SK-N-SH (cell line): ENCODE measurements at regions of chr6 and their contacts with region 1.

Region 1: GRCh38 chr6:107847844-107848802 is 24.0 kb upstream of the SCML4 start:
- DNase-seq: peak; percentile 95
- H3K4me3 ChIP-seq: peak overlapping the region; percentile 47 to 64
- H3K27ac ChIP-seq: no peak overlapping the region
- H3K4me1 ChIP-seq: peaks cover 0 to 4% of the 10 kb centered on the region in 2 experiments; a peak in 1 of 4 replicates
- H3K27me3 ChIP-seq: no peaks in the 10 kb centered on the region; the same call in 1 of the 2 replicates
- CTCF ChIP-seq: peak; percentile 88
- EP300 ChIP-seq: no peak
- RAD21 ChIP-seq: peak; percentile 82

Region 2: DNA sequence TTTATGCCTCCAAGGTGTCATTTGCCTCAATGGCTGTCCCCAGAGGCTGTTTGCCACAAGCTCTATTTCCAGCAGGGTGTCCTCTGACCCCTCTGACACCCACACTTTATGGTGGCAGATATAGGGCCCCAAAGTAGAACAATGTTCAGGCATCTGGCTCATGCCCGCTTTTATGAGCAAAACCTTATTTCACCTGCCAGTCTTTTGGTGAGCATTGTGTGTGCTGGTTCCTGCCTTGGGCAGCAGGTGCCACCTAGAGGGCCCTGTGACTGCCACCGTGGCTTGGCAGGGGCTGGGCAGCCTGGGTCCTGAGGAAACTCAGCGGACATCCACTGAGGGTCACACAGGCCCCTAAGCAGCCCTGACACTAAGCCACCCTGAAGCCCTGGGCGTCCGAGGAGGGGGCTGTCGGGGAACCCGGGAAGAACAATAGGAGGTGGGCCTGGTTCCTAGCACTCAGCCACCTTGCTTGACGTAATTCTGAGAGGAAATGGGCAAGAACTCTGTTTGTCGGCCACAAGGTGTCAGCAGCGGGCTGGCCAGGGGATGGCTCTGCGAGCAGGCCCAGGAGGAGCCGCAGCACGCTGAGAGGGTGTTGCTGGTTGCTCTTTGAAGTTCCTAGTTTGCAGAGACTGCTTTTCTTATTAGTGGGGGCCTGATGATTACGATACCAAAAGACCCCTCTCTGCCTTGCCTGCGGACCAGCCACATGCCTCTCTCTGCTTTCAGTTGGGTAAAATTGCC is 173.0 kb before region 1 on chr6:
- CTCF ChIA-PET with region 1: interaction called, 98 read pairs
- POLR2A ChIA-PET with region 1: no interaction called
- DNase-seq: peak; percentile 83
- H3K4me3 ChIP-seq: no peak overlapping the region; a peak in 1 of 4 replicates
- H3K27ac ChIP-seq: peak overlapping the region in 1 of 2 experiments; percentile 64; a peak in 1 of 4 replicates
- H3K4me1 ChIP-seq: peaks cover 0 to 22% of the 10 kb centered on the region in 2 experiments; a peak in 2 of 4 replicates
- H3K27me3 ChIP-seq: no peaks in the 10 kb centered on the region
- CTCF ChIP-seq: peak; percentile 83
- EP300 ChIP-seq: no peak
- RAD21 ChIP-seq: peak; percentile 86

Region 3: DNA sequence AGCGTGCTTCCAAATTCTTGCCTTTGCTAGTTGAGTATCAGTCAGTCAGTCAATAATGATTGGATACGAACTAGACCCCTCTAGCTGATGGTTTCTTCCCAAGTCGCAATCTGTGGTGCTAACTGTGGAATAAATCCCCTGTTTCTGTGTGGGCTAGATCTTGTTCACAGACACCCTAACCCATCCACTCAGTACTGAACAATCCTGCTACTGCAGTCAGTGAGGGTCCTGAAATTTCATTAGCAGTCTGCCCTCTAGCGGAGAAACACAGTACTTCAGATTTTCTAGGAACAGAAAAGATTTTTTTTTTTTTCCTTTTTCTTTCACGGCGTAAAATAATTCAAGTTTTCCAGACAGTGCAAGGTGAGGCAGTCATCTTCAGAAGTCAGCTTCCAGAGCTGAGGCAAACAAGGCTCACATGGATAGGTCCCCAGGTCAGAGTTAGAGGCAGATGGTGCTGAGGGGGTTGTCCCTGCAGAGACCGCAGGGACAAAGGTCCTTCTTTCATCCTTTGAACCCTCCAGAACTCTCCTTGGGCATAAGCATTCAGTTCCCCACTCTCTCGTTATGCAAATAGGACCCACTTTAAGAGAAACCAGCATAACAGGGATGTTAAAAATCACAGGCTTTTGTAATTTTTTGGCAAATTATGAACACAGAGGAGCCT is 143.6 kb before region 1 on chr6:
- CTCF ChIA-PET with region 1: interaction called, 10 read pairs
- POLR2A ChIA-PET with region 1: no interaction called
- DNase-seq: peak; percentile 69
- H3K4me3 ChIP-seq: no peak overlapping the region; a peak in 1 of 4 replicates
- H3K27ac ChIP-seq: no peak overlapping the region; a peak in 1 of 4 replicates
- H3K4me1 ChIP-seq: peaks cover 0 to 3% of the 10 kb centered on the region in 2 experiments; a peak in 1 of 4 replicates
- H3K27me3 ChIP-seq: no peaks in the 10 kb centered on the region
- CTCF ChIP-seq: peak; percentile 83
- EP300 ChIP-seq: no peak
- RAD21 ChIP-seq: peak; percentile 69

Region 4: DNA sequence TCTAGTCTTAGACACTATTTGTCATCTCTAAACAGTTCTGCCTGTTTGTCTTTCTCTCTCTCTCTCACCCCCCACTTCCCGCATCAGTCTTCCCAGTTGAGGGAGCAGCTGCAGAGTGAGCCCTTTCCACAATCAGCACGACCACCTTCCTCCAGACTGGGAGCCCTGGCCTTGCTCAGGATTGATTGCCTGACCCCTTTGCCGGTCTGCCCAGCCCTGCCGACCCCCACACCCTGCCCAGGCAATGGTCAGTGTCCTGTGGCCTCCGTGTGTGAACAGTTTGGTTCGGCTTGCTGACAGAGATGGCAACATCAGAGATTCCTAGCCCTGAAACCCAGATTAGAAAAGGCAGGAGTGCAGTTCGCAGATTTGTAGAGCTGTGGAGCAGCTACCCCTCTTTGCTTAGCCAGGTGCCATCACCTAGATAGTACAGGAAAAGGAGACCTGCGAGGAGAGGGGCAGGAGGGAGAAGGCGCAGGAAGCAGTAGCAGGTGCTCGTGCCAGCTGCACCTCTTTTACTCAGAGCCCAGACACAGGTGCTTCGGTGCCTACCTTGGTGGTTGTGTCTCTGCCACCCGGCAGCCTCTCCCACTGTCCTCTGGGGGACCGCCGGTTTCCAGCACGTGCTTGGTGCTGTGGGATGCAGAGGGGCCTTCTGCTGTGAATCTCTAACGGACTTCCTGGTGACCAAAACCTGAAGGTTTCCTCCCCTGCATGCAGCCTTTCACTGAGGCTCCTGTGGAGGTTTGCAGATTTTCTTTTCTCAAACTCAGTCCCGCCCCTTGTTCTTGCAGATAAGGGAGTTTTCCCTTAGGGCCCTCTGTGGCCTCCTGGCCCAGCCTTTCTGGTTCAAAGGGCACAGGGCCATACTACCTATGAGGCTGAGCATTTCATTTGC is 116.5 kb before region 1 on chr6:
- CTCF ChIA-PET with region 1: interaction called, 14 read pairs
- POLR2A ChIA-PET with region 1: no interaction called
- DNase-seq: no peak
- H3K4me3 ChIP-seq: no peak overlapping the region
- H3K27ac ChIP-seq: no peak overlapping the region
- H3K4me1 ChIP-seq: peaks cover 0 to 5% of the 10 kb centered on the region in 2 experiments; a peak in 1 of 4 replicates
- H3K27me3 ChIP-seq: no peaks in the 10 kb centered on the region; the same call in 1 of the 2 replicates
- CTCF ChIP-seq: no peak
- EP300 ChIP-seq: no peak
- RAD21 ChIP-seq: no peak

Region 5: GRCh38 chr6:107806691-107807090 is 41.4 kb before region 1 on chr6:
- CTCF ChIA-PET with region 1: interaction called, 20 read pairs
- POLR2A ChIA-PET with region 1: no interaction called
- DNase-seq: peak; percentile 67
- H3K4me3 ChIP-seq: no peak overlapping the region; a peak in 1 of 4 replicates
- H3K27ac ChIP-seq: no peak overlapping the region
- H3K4me1 ChIP-seq: peaks cover 0 to 9% of the 10 kb centered on the region in 2 experiments; a peak in 1 of 4 replicates
- H3K27me3 ChIP-seq: no peaks in the 10 kb centered on the region
- CTCF ChIP-seq: no peak
- EP300 ChIP-seq: no peak
- RAD21 ChIP-seq: no peak

Region 6: DNA sequence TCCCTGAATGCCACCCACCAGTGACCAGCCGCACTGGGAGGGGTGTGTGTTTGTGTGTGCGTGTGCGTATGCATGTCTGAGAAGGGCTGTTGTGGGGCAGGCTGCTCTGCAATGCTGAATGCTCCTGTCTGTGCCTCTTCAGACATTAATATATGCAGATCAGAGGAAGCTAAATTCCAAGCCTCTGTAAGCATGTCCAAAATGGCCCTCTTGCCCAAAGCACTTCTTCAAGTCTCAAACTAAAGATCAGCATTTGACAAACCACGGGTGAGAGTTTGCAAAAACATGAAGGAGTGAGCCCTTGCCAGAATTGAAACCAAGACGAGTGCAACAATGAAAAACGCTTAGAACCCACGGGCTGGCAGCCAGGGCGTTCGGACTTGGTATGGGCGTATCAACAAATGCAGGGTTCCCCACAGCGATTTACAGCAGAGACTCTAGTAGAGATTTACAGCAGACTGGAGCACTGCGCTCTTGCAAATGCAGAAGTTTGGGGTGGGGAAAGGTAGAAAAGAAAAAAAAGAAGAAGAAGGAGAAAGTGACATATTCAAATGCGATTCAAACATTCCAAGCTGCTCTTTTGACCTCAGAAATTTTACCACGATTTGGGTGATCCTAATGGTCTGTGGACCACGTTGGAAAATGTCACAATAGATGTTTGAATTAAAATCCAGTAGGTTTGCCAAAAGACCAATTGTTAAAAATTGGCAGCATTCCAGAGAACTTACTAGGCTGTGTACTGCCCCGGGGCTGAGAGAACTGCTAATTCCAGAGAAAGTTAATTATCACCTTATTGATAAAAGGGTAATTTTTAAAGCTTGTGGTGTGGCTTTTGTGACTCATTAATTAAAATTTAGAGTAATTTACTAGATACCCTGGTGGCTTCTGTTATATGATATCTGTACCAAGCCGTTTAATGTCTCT is 27.5 kb before region 1 on chr6:
- CTCF ChIA-PET with region 1: interaction called, 59 read pairs
- POLR2A ChIA-PET with region 1: no interaction called
- DNase-seq: peak; percentile 37
- H3K4me3 ChIP-seq: peak overlapping the region; percentile 32 to 63
- H3K27ac ChIP-seq: peak overlapping the region in 1 of 2 experiments; percentile 50; a peak in 2 of 4 replicates
- H3K4me1 ChIP-seq: peaks cover 0 to 33% of the 10 kb centered on the region in 2 experiments; a peak in 3 of 4 replicates
- H3K27me3 ChIP-seq: peaks cover 8% of the 10 kb centered on the region; the same call in 1 of the 2 replicates
- CTCF ChIP-seq: no peak
- EP300 ChIP-seq: no peak
- RAD21 ChIP-seq: no peak

Region 7: DNA sequence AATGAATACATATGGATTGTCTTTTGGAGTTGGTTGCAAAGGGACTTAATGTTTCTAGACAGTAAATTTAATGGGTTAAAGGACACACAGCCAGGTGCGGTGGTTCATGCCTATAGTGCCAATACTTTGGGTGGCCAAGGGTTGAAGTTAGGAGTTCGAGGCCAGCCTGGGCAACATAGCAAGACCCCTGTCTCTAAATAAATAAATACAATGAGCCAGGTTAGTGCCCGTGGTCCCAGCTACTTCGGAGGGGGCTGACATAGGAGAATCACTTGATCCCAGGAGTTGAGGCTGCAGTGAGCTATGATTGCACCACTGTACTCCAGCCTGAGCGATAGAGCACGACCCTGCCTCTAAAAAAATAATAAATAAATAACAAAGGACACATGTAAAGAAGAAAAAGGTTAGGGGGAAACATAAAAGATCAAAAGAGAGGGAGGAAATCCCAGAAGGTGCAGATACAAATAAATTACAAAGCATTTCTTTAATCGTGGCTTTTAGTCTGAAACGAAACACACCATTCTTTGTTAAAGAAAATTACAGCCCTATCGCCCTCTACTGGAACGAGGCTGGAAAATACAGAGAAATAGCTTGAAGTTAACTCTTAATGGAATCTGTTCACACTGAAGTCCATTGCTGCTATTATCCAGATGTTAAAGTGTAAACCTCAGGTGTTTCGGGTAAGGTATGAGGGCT is 18.6 kb after region 1 on chr6:
- CTCF ChIA-PET with region 1: interaction called, 55 read pairs
- POLR2A ChIA-PET with region 1: no interaction called
- DNase-seq: peak; percentile 51
- H3K4me3 ChIP-seq: no peak overlapping the region
- H3K27ac ChIP-seq: no peak overlapping the region
- H3K4me1 ChIP-seq: peaks cover 0 to 15% of the 10 kb centered on the region in 2 experiments; a peak in 2 of 4 replicates
- H3K27me3 ChIP-seq: no peaks in the 10 kb centered on the region
- CTCF ChIP-seq: peak; percentile 64
- EP300 ChIP-seq: no peak
- RAD21 ChIP-seq: peak; percentile 61

Region 8: GRCh38 chr6:107931894-107932293 is 83.8 kb after region 1 on chr6:
- CTCF ChIA-PET with region 1: no interaction called
- POLR2A ChIA-PET with region 1: no interaction called
- DNase-seq: no peak
- H3K4me3 ChIP-seq: no peak overlapping the region
- H3K27ac ChIP-seq: no peak overlapping the region
- H3K4me1 ChIP-seq: no peaks in the 10 kb centered on the region
- H3K27me3 ChIP-seq: no peaks in the 10 kb centered on the region
- CTCF ChIP-seq: no peak
- EP300 ChIP-seq: no peak
- RAD21 ChIP-seq: no peak